Caco-2 (cell line): ENCODE measurements at regions of chr7 and their contacts with region 1.

Region 1: DNA sequence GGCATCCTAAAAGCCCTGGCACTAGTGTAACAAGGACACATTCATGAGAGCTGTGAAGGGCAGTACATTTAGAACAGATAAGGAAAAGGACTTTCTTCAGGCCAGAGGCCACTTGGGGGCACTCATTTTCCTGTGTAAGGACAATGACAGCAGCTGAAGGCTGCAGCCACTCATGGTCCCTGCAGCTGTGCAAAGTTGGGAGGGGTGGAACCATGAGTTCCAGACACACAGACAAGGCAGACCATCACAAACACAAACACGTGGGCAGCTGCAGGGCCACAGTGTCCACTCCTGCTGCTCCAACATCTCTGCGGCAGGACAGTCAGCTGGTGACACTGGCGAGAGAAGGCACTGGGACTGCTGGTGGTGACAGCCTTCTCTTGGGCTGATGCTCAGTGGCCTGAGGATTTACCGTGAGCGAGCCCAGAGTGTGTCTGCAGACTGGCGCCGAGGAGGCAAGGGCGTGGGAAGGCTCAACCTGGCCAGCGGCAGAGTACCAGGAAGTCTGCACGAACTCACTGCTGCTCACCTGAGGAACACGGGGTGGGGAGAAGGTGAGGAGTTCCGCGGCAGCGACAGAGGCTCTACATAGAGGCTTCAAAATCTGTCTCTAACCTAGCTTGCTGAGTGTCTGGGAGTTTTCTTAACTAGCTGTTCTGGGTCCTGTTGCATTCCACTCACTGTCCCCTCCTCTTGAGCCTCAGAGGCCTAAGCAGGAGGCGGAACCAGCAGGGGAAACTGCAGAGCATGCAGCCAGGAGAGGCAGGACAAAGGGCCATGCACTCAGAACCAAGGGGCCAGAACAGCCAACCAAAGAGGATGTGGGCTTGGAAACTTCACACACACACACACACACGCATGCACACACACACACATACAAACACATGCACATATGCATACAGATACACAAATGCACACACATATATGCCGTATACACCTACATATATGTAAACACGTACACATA is 76.5 kb upstream of the DDC start:
- DNase-seq: peak in 1 of 2 experiments; percentile 32
- H3K4me3 ChIP-seq: no peak overlapping the region
- H3K4me3 Mint-ChIP-seq: no peak overlapping the region
- H3K27ac Mint-ChIP-seq: no peak overlapping the region
- H3K4me1 ChIP-seq: no peaks in the 10 kb centered on the region
- H3K4me1 Mint-ChIP-seq: no peaks in the 10 kb centered on the region
- H3K27me3 ChIP-seq: no peaks in the 10 kb centered on the region
- H3K27me3 Mint-ChIP-seq: no peaks in the 10 kb centered on the region
- CTCF ChIP-seq: peak in 1 of 2 experiments; percentile 49

Region 2: GRCh38 chr7:50679218-50680007 is 37.7 kb after region 1 on chr7:
- CTCF ChIA-PET with region 1: no interaction called
- POLR2A ChIA-PET with region 1: no interaction called
- intact Hi-C with region 1: loop called (anchors 5 kb)
- DNase-seq: peak in 1 of 2 experiments; percentile 22
- H3K4me3 ChIP-seq: no peak overlapping the region
- H3K4me3 Mint-ChIP-seq: no peak overlapping the region
- H3K27ac Mint-ChIP-seq: no peak overlapping the region
- H3K4me1 ChIP-seq: no peaks in the 10 kb centered on the region
- H3K4me1 Mint-ChIP-seq: no peaks in the 10 kb centered on the region
- H3K27me3 ChIP-seq: no peaks in the 10 kb centered on the region
- H3K27me3 Mint-ChIP-seq: no peaks in the 10 kb centered on the region
- CTCF ChIP-seq: peak in 1 of 2 experiments; percentile 15